Activated CD4-positive, alpha-beta memory T cell treated with anti-CD3 and anti-CD28 coated beads for 36 hours (primary cell): ENCODE measurements at regions of chr1 and their contacts with region 1.

Region 1: GRCh38 chr1:93179886-93180722 is at the start of gene TMED5:
- DNase-seq: peak; percentile 98
- H3K4me3 Mint-ChIP-seq: peak within 1 kb of the TSS; percentile 88
- H3K27ac Mint-ChIP-seq: peak within 1 kb of the TSS; percentile 97
- H3K4me1 Mint-ChIP-seq: peaks cover 57% of the 10 kb centered on the region
- H3K27me3 Mint-ChIP-seq: no peaks in the 10 kb centered on the region
- total RNA-seq, gene TMED5: 47.0 to 49.2 TPM

Region 2: GRCh38 chr1:92980732-92981647 is 199.1 kb before region 1 on chr1:
- CTCF ChIA-PET with region 1: no interaction called
- POLR2A ChIA-PET with region 1: no interaction called
- intact Hi-C with region 1: loop called (anchors 5 kb)
- DNase-seq: peak; percentile 55
- H3K4me3 Mint-ChIP-seq: peak overlapping the region; percentile 58
- H3K27ac Mint-ChIP-seq: peak overlapping the region; percentile 98
- H3K4me1 Mint-ChIP-seq: peaks cover 58% of the 10 kb centered on the region
- H3K27me3 Mint-ChIP-seq: no peaks in the 10 kb centered on the region

Region 3: DNA sequence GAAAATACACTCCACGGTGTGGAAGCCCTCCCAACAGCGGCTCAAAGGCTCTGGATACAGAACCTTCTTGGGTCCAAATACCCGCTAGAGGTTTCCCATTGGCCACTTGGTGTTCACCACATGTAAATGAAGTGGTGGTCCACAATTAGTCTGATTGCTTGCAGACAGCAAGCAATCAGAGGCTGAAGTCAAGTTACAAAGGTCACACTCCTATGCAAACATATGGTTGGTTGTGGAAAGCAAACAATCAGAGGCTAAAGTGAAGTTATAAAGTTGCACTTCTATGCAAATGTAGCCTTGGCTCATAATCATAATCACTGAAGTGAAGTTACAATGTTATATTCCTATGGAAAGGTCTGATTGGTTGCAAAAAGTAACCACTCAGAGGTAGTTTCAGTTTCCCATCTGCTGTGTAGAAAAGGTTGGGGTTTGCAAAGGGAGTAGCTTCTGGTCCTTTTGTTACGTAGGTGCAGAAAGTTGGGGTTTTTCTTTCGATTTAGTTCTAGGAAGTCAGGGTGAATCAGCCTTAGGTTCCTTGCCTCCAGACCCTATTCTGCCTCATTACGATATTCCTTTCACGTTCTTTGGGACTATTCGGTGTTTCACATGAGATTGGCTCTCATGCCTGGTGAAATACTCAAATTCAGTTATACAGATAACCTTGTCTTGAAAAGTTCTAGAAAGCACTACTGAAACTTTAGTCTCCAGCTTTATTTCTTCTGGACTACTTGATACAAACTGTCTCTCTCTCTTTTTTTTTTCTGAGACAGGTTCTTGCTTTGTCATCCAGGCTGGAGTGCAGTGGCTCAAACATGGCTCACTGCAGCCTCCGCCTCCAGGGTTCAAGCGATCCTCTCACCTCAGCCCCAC is 137.7 kb before region 1 on chr1:
- CTCF ChIA-PET with region 1: no interaction called
- POLR2A ChIA-PET with region 1: no interaction called
- intact Hi-C with region 1: loop called (anchors 1 kb)
- DNase-seq: peak; percentile 21
- H3K4me3 Mint-ChIP-seq: peak overlapping the region; percentile 71
- H3K27ac Mint-ChIP-seq: peak overlapping the region; percentile 88
- H3K4me1 Mint-ChIP-seq: peaks cover 28% of the 10 kb centered on the region
- H3K27me3 Mint-ChIP-seq: no peaks in the 10 kb centered on the region

Region 4: DNA sequence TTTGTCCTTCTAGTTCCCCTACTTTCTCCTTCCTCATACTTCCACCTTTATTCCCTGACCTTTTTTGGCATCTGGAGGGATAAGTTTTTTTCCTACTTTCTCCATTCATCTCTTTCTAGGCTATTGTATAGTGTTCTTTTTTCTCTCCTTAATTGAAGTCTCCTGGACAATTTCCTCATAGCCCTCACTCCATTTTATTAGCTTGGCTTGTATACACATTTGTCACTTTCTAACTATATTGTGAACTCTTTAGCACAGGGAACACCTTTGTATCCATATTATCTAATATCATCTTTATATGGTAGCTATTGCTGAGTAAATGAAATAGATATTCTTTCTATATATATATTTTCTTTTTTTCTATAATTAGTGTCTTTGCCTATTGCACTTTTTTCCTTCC is 47.5 kb before region 1 on chr1:
- CTCF ChIA-PET with region 1: no interaction called
- POLR2A ChIA-PET with region 1: no interaction called
- intact Hi-C with region 1: no loop called
- DNase-seq: no peak
- H3K4me3 Mint-ChIP-seq: no peak overlapping the region
- H3K27ac Mint-ChIP-seq: no peak overlapping the region
- H3K4me1 Mint-ChIP-seq: no peaks in the 10 kb centered on the region
- H3K27me3 Mint-ChIP-seq: no peaks in the 10 kb centered on the region

Region 5: DNA sequence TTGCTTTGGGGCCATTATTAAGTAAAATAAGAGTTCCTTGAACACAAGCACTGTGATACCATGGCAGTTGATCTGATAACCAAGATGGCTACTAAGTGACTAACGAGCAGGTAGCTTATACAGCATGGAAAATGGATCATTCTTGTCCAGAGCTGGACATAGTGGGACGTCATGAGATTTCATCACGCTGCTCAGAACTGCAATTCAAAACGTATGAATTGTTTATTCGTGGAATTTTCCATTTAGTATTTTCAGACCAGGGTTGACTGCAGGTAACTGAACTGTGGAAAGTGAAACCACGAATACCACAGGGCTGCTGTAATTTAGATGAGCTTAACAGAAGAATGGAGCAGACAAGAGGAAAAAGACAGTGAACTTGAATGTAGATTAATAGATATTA is 39.3 kb after region 1 on chr1:
- CTCF ChIA-PET with region 1: no interaction called
- POLR2A ChIA-PET with region 1: no interaction called
- intact Hi-C with region 1: loop called (anchors 1 kb)
- DNase-seq: peak; percentile 30
- H3K4me3 Mint-ChIP-seq: peak overlapping the region; percentile 61
- H3K27ac Mint-ChIP-seq: peak overlapping the region; percentile 70
- H3K4me1 Mint-ChIP-seq: peaks cover 26% of the 10 kb centered on the region
- H3K27me3 Mint-ChIP-seq: no peaks in the 10 kb centered on the region

Region 6: DNA sequence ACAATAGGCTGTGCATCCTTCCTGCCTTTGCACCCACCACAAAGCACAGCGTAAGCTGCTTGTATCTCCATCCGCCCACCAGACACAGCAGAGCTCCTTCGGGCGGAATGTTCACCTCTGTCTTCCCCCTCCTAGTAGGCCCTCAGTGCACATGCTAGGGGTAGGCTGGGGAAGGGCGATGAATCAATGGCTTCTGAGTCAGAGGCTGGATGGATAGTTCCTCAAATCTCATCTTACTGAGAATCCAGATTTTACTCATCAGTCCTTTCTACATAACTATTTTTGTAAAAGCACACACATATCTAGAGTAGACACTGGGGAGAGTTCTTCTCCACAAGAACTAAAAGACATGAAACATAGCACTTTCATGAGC is 427.7 kb after region 1 on chr1:
- CTCF ChIA-PET with region 1: no interaction called
- POLR2A ChIA-PET with region 1: no interaction called
- intact Hi-C with region 1: loop called (anchors 5 kb)
- DNase-seq: peak; percentile 85
- H3K4me3 Mint-ChIP-seq: no peak overlapping the region
- H3K27ac Mint-ChIP-seq: peak overlapping the region; percentile 43
- H3K4me1 Mint-ChIP-seq: peaks cover 39% of the 10 kb centered on the region
- H3K27me3 Mint-ChIP-seq: peaks cover 21% of the 10 kb centered on the region

Region 7: DNA sequence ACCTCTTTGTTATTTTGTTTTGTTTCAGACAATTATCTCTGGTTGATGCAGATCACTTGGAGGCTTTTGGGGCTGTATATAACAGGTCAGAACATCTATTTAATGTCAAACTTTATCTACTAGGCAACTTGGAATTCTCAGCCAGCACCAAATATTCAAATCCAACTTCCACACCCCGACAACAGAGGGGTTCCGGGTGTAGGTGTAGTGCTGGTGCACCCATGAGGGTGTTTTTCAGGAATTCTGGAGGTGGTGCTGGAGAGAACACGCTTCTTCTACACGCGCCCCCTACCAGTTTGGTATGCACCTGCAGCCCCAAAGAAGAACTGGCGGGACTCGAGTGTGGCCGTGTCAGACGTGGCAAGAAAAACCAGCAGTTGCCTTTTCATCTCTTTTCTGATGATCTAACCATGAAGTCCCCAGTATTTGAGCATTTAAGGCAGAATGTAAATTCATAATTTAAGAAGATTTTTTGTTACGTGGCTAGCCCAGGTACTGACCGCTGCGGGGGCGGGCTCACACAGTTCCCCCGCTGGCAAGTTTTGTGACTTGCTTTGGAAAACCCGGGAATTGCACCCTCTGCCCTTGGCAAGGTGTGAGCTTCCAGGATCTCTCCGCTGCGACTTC is 1936.6 kb after region 1 on chr1:
- CTCF ChIA-PET with region 1: no interaction called
- POLR2A ChIA-PET with region 1: no interaction called
- intact Hi-C with region 1: no loop called
- DNase-seq: peak; percentile 62
- H3K4me3 Mint-ChIP-seq: peak overlapping the region; percentile 78
- H3K27ac Mint-ChIP-seq: no peak overlapping the region
- H3K4me1 Mint-ChIP-seq: peaks cover 6% of the 10 kb centered on the region
- H3K27me3 Mint-ChIP-seq: peaks cover 20% of the 10 kb centered on the region